Psoas muscle (tissue), 8 donors: ENCODE measurements at regions of chr18 and their contacts with region 1.

Region 1: DNA sequence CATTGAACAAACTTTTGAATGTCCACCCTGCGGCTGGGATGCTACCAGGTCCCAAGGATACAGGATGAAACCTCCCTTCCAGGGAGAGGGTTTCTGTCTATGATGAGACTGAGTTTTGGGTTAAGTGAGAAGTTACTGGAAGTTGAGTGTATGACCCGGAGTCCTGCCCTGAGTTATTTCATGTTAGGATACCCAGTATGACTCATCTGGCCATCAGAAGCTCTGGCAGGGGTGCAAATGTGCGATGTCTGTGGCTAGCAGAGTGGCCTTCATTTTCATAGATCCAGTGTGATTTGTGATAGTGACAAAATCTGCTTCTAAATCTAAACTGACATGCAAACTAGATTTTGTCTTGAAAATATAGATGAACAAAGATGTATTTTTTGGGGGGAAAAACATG is 55.3 kb downstream of the KCTD1 start:
- DNase-seq: no peak
- ATAC-seq: no peak
- H3K4me3 ChIP-seq: no peak overlapping the region
- H3K27ac ChIP-seq: no peak overlapping the region
- H3K4me1 ChIP-seq: peaks cover 5% of the 10 kb centered on the region
- H3K27me3 ChIP-seq: no peaks in the 10 kb centered on the region
- CTCF ChIP-seq: no peak

Region 2: DNA sequence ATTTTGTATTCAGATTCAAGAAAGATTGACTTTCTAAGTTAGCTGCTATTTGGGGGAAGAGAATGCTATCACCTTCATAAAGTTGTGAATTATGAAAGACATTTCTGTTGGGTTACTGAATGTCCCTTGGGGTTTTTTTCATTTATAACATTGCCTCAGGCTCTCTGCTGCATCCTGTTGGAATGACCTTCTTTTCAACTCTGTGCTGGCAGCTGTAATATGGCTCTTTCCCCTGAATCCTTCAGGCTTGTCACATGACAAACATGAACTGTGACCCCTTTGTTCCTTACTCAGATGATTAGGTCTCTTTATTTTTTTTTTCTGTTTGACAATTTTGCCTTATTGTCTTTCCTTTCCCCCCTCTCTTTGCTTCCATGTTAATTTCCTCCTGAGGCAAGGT is 107.0 kb before region 1 on chr18:
- intact Hi-C with region 1: no loop called
- DNase-seq: no peak
- ATAC-seq: peak in 3 of 4 donors; percentile 44 to 53 (median 51)
- H3K4me3 ChIP-seq: no peak overlapping the region
- H3K27ac ChIP-seq: no peak overlapping the region
- H3K4me1 ChIP-seq: no peaks in the 10 kb centered on the region
- H3K27me3 ChIP-seq: no peaks in the 10 kb centered on the region
- CTCF ChIP-seq: no peak

Region 3: GRCh38 chr18:26540043-26540628 is 47.1 kb after region 1 on chr18:
- intact Hi-C with region 1: loop called in 1 of 2 experiments (anchors 5 kb)
- DNase-seq: no peak
- ATAC-seq: peak in 1 of 4 donors; percentile 36
- H3K4me3 ChIP-seq: no peak overlapping the region
- H3K27ac ChIP-seq: no peak overlapping the region
- H3K4me1 ChIP-seq: peaks cover 10% of the 10 kb centered on the region
- H3K27me3 ChIP-seq: no peaks in the 10 kb centered on the region
- CTCF ChIP-seq: no peak